ENCODE measurements at regions of chr14 and their contacts with region 1.

Region 1: GRCh38 chr14:36070031-36070719 is 106.3 kb downstream of the PTCSC3 start:
- DNase-seq: peak; percentile 54
- H3K4me3 ChIP-seq: no peak overlapping the region
- H3K27ac ChIP-seq: no peak overlapping the region
- H3K4me1 ChIP-seq: peaks cover 0 to 6% (median 2%) of the 10 kb centered on the region in 4 donors
- H3K27me3 ChIP-seq: peaks cover 8% of the 10 kb centered on the region
- CTCF ChIP-seq: peak; percentile 35 to 56 (median 49)
- EP300 ChIP-seq: no peak
- POLR2A ChIP-seq: no peak

Region 2: DNA sequence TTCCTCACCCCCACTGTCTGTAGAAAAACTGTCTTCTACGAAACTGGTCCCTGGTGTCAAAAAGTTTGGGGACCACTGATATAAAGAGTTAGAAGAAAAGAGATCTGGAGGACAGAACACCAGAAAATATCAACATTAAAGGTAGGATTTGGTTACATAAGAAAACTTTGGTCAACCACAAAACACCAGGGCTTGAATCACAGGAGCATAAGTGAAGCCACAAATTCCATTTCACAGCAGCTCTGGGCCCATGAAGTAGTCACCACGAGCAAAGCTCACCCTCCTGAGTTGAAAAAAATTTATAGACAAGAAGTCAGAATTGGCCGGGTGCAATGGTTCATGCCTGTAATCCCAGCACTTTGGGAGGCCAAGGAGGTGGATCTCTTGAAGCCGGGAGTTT is 280.5 kb before region 1 on chr14:
- in situ Hi-C with region 1: no loop called
- intact Hi-C with region 1: no loop called
- DNase-seq: no peak
- H3K4me3 ChIP-seq: no peak overlapping the region
- H3K27ac ChIP-seq: no peak overlapping the region
- H3K4me1 ChIP-seq: peaks cover 0 to 10% (median 1%) of the 10 kb centered on the region in 4 donors
- H3K27me3 ChIP-seq: no peaks in the 10 kb centered on the region
- CTCF ChIP-seq: no peak
- EP300 ChIP-seq: no peak
- POLR2A ChIP-seq: no peak

Region 3: GRCh38 chr14:35883677-35884293 is 186.4 kb before region 1 on chr14:
- in situ Hi-C with region 1: loop called in 1 of 4 experiments (anchors 25 kb)
- intact Hi-C with region 1: no loop called
- DNase-seq: peak; percentile 29
- H3K4me3 ChIP-seq: no peak overlapping the region
- H3K27ac ChIP-seq: no peak overlapping the region
- H3K4me1 ChIP-seq: peaks cover 0 to 10% (median 2%) of the 10 kb centered on the region in 4 donors
- H3K27me3 ChIP-seq: no peaks in the 10 kb centered on the region
- CTCF ChIP-seq: peak; percentile 51 to 57 (median 54)
- EP300 ChIP-seq: no peak
- POLR2A ChIP-seq: no peak

Region 4: GRCh38 chr14:36194663-36195062 is 124.5 kb after region 1 on chr14:
- in situ Hi-C with region 1: no loop called
- intact Hi-C with region 1: no loop called
- DNase-seq: no peak
- H3K4me3 ChIP-seq: no peak overlapping the region
- H3K27ac ChIP-seq: no peak overlapping the region
- H3K4me1 ChIP-seq: no peaks in the 10 kb centered on the region
- H3K27me3 ChIP-seq: no peaks in the 10 kb centered on the region
- CTCF ChIP-seq: no peak
- EP300 ChIP-seq: no peak
- POLR2A ChIP-seq: no peak